Activated T-helper 2 cell treated with anti-CD3 and anti-CD28 coated beads, Interferon-gamma antibody, Interleukin-2, Interleukin-4, amounts not matched to agents 10 μg/mL and 5 μg/mL and 100 μg/mL, durations not matched to agents 14 hours and 24 hours and 36 hours (primary cell): ENCODE measurements at regions of chr11 and their contacts with region 1.

Region 1: GRCh38 chr11:118198370-118198769 is 21.9 kb upstream of the SCN2B start:
- DNase-seq: peak; percentile 69
- H3K4me3 Mint-ChIP-seq: peak overlapping the region; percentile 31
- H3K27ac Mint-ChIP-seq: peak overlapping the region; percentile 66
- H3K4me1 Mint-ChIP-seq: peaks cover 11% of the 10 kb centered on the region
- H3K27me3 Mint-ChIP-seq: no peaks in the 10 kb centered on the region

Region 2: DNA sequence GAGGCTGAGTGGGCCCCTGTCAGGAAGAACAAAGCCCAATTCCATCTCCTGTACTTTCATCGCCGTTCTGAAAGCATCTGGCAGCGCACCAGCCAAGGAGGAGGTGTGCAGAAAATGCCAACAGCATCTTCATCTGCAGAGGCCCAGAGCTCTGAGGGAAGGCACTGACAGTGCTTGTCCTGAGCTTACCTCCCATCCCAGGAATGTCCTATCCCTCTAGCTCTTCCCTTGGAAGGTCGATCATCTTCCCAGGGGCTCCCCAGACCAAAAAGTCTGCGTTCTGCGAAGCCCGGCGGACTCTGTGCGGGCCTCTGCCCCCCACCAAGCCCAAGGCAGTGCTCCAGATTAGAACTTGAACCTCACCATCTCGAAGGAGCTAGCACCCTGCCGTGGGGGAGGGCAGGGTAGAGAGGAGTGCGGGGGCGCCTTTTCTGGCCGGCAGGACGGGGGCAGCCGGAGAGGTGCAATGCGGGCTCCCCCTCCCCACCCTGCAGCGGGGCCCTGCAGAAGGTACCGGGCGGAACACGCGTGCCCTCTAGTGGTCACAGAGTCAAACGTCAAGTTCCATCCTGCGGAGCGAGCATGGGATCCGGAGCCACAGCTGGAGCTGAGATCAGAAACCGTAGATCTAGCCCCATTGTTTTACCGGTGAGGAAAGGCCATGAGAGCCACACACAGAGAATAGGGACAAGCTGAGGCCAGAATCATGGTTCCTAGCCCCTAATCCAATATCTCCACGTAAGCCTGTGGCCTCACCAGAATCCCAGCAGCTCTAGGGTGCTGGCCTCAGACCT is 26.9 kb before region 1 on chr11:
- intact Hi-C with region 1: no loop called
- DNase-seq: peak; percentile 65
- H3K4me3 Mint-ChIP-seq: no peak overlapping the region
- H3K27ac Mint-ChIP-seq: no peak overlapping the region
- H3K4me1 Mint-ChIP-seq: no peaks in the 10 kb centered on the region
- H3K27me3 Mint-ChIP-seq: peaks cover 27% of the 10 kb centered on the region

Region 3: DNA sequence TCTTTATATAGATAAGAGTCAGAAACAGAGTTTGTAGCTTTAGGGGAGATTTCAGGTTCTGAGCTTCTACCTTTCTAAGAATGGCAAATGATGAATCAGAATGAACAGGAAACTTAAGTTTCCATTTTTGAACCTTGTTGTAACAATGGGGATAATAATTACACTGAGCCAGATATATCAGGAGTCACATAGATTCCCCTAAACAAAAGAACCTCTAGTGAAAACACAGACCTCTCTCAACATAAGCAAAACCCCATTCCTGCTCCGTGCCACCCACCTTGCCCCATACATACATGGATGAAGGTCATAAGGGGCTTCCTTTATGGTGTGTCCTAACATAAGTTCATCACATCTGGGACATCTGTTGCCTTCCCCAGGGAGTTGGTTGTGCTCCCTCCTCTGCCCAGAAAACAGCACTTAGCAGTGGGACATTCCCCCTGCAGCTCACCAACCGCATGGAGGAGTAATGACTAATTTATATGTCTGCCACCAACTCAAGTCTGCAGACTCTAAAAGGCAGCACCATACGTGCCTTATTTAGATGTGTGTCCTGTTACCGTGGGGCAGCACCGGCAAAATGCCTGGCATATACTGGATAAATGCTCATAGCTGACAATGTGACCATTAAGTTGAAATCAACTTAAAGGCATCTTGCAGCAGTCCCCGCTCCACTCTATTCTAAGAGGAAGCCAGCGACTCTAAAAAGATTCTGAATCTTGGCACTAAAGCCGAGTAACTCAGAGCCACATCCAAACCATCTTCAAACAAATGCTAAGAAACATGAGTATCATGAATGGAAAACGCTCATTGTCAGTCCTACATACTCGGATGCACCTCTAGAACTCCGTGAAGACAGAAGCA is 18.5 kb after region 1 on chr11:
- intact Hi-C with region 1: loop called (anchors 1 kb)
- DNase-seq: no peak
- H3K4me3 Mint-ChIP-seq: peak overlapping the region; percentile 82
- H3K27ac Mint-ChIP-seq: peak overlapping the region; percentile 97
- H3K4me1 Mint-ChIP-seq: peaks cover 93% of the 10 kb centered on the region
- H3K27me3 Mint-ChIP-seq: no peaks in the 10 kb centered on the region

Region 4: GRCh38 chr11:118240999-118241768 is 42.8 kb after region 1 on chr11:
- intact Hi-C with region 1: loop called (anchors 1 kb)
- DNase-seq: peak; percentile 65
- H3K4me3 Mint-ChIP-seq: peak overlapping the region; percentile 78
- H3K27ac Mint-ChIP-seq: peak overlapping the region; percentile 95
- H3K4me1 Mint-ChIP-seq: peaks cover 84% of the 10 kb centered on the region
- H3K27me3 Mint-ChIP-seq: no peaks in the 10 kb centered on the region

Region 5: GRCh38 chr11:118290923-118291322 is 92.6 kb after region 1 on chr11:
- intact Hi-C with region 1: loop called (anchors 1 kb)
- DNase-seq: peak; percentile 21
- H3K4me3 Mint-ChIP-seq: no peak overlapping the region
- H3K27ac Mint-ChIP-seq: no peak overlapping the region
- H3K4me1 Mint-ChIP-seq: peaks cover 22% of the 10 kb centered on the region
- H3K27me3 Mint-ChIP-seq: no peaks in the 10 kb centered on the region

Region 6: DNA sequence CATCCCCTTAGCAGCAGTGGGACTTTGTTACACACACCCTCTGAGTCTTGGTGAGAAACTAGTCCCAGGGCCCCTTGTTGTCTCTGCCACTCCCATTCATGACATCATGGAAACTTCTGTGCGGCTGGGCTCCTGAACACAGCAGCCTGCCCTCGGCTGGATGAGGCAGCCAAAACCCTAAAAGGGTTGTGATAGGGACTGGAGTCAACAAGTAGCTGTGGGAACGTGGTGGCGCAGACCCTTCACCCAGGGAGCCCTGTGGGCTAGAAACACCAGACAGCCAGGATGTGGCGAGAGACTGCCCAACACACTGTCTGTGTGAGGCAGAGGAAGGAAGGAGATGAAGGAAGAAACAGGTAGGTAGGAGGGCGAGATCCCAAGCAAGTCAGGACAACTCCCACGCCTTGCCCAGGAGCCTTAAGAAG is 140.3 kb after region 1 on chr11:
- intact Hi-C with region 1: loop called (anchors 2 kb)
- DNase-seq: peak; percentile 88
- H3K4me3 Mint-ChIP-seq: peak overlapping the region; percentile 86
- H3K27ac Mint-ChIP-seq: peak overlapping the region; percentile 100
- H3K4me1 Mint-ChIP-seq: peaks cover 56% of the 10 kb centered on the region
- H3K27me3 Mint-ChIP-seq: no peaks in the 10 kb centered on the region

Region 7: DNA sequence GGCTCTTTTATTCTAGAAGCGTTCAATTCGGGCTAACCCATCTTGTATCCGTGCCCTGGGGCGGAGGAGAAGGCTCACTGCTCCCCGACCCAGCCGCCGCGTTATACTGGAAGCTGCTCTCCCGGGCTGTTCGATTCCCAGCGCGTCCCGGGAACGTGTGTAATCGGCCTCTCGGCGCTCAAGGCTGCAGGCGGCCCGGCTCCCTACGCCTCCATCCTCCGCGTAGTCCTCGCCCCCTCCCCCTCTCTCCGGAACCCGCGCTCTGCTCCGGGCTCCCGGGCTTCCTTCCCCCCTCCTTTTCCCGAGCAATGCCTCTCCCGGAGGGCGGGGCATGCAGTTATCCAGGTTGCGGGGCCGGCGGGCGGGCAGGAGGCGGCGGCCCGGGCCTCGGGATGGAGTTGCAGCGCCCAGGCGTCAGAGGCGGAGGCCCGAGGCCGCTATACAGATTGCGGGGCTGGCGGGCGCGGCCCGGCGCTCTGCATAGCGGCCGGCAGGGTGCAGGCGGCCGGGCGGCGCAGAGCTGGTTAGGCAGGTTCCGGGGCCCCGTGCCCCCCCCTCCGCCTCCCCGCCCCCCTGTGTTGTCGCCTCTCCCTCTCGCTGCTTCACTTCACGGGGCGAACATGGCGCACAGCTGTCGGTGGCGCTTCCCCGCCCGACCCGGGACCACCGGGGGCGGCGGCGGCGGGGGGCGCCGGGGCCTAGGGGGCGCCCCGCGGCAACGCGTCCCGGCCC is 237.7 kb after region 1 on chr11 and contains the start of gene KMT2A:
- intact Hi-C with region 1: loop called (anchors 1 kb)
- DNase-seq: peak; percentile 94
- H3K4me3 Mint-ChIP-seq: peak within 1 kb of the TSS; percentile 93
- H3K27ac Mint-ChIP-seq: peak within 1 kb of the TSS; percentile 89
- H3K4me1 Mint-ChIP-seq: peaks cover 39% of the 10 kb centered on the region
- H3K27me3 Mint-ChIP-seq: peaks cover 7% of the 10 kb centered on the region
- total RNA-seq, gene KMT2A: 61.6 and 64.2 TPM in 2 replicates